ENCODE measurements at regions of chr22 and their contacts with region 1.

Region 1: GRCh38 chr22:17077255-17077654 is 7.5 kb upstream of the IL17RA start:
- DNase-seq: no peak
- ATAC-seq: no peak
- H3K4me3 ChIP-seq: no peak overlapping the region
- H3K27ac ChIP-seq: no peak overlapping the region
- H3K4me1 ChIP-seq: peaks cover 0 to 23% (median 0%) of the 10 kb centered on the region in 12 donors
- H3K27me3 ChIP-seq: no peaks in the 10 kb centered on the region
- CTCF ChIP-seq: no peak
- POLR2A ChIP-seq: no peak

Region 2: DNA sequence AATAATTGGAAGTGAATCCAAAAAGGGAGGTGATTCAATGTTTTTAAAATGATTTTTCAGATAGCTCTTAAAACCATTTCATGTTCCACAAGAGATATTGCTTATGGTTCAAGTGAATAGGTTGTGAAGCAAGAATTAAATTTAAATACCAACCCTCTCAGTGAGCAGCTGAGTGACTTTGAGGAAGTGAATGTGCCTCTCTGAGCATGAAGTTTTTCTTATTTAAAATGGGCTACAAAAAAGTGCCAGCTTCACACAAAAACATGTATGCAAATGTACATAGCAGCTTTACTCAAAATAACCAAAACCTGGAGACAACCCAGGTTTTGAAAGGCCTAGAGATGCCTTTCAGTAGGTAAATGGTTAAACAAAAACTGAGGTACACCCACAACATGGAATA is 33.7 kb before region 1 on chr22:
- intact Hi-C with region 1: no loop called
- DNase-seq: no peak
- ATAC-seq: no peak
- H3K4me3 ChIP-seq: no peak overlapping the region
- H3K27ac ChIP-seq: no peak overlapping the region
- H3K4me1 ChIP-seq: no peaks in the 10 kb centered on the region
- H3K27me3 ChIP-seq: peaks cover 0 to 4% (median 0%) of the 10 kb centered on the region in 9 donors
- CTCF ChIP-seq: no peak
- POLR2A ChIP-seq: no peak

Region 3: GRCh38 chr22:17121227-17122195 is 44.3 kb after region 1 on chr22 and contains the start of gene TMEM121B:
- intact Hi-C with region 1: loop called in 1 of 10 experiments (anchors 2 kb)
- DNase-seq: peak; percentile 83 to 91 (median 89)
- ATAC-seq: peak; percentile 47 to 88 (median 84)
- H3K4me3 ChIP-seq: peak within 1 kb of the TSS; percentile 55 to 79 (median 65)
- H3K27ac ChIP-seq: peak within 1 kb of the TSS; percentile 46 to 87 (median 64)
- H3K4me1 ChIP-seq: peaks cover 0 to 48% (median 19%) of the 10 kb centered on the region in 12 donors
- H3K27me3 ChIP-seq: peaks cover 0 to 13% (median 0%) of the 10 kb centered on the region in 9 donors
- CTCF ChIP-seq: no peak
- POLR2A ChIP-seq: no peak
- total RNA-seq, gene TMEM121B: 1.1 to 3.3 (median 1.8) TPM

Region 4: DNA sequence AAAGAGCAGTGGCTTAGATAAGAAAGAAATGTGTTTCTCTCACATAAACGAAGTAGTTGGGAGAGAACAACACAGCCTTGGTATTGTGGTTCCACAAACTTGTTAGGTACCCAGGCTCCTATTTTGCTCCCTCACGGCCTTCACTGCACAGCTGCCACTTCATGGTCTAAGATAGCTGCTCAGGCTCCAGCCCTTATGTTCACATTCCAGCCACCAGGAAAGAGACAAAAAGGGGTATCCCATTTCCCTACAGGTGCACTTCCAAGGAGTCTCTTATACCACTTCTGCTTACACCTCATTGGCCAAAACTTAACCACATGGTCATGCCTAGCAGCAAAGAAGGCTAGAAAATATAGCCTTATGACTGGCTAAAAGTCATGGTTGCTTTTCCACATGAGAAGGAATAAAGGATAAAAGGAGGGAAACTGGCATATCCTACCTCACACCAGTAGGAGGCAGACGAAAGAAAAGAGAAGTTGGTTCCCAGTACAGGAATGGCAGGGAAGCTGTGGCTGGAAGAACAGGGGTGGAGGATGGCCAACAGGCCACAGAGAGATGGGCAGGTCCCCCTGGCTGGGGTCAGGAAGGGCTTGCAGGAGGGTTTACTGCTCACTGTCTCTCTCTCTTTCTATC is 87.3 kb after region 1 on chr22:
- intact Hi-C with region 1: loop called in 1 of 10 experiments (anchors 5 kb)
- DNase-seq: no peak
- ATAC-seq: no peak
- H3K4me3 ChIP-seq: no peak overlapping the region
- H3K27ac ChIP-seq: no peak overlapping the region
- H3K4me1 ChIP-seq: peaks cover 0 to 23% (median 7%) of the 10 kb centered on the region in 12 donors
- H3K27me3 ChIP-seq: no peaks in the 10 kb centered on the region
- CTCF ChIP-seq: peak in 1 of 12 donors; percentile 12
- POLR2A ChIP-seq: no peak

Region 5: DNA sequence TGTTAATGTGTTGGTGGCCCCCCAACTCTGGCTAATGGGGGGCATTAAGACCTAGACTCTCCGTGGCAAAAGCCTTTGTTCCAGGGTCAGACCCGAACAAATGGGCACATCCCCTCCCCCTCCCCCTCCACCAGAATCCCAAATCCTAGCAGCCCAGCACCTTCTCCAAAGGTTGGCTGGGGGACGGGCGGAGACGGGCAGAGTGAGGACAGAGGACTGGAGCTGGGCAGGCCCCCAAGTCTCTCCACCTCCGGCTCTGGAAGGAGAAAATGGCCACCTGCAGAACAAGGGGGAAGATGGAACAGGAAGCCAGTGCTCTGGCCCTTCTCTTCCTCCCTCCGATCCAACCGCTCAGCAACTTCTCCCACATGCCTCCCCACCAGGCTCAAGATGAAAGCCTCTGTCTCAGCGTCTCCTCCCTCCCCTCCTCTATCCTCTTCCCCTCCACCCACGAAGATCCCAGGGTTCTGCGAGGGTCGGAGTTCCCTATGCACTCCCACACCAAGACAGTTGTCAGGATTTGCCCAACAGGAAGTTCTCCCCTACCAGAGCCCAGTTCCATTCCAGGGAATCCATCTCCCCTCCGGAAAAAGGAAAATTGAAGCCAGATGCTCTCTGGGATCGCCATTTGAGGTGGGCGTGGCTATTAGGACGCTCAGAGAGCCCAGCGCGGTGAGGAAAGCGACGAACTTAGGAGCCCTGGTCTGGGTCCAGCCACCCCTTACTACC is 121.9 kb after region 1 on chr22:
- intact Hi-C with region 1: loop called in 2 of 10 experiments (anchors 5 to 10 kb)
- DNase-seq: peak in 4 of 5 donors; percentile 50 to 69 (median 66)
- ATAC-seq: peak; percentile 43 to 82 (median 76)
- H3K4me3 ChIP-seq: peak overlapping the region; percentile 1 to 62 (median 53)
- H3K27ac ChIP-seq: peak overlapping the region; percentile 66 to 92 (median 87)
- H3K4me1 ChIP-seq: peaks cover 0 to 21% (median 7%) of the 10 kb centered on the region in 12 donors
- H3K27me3 ChIP-seq: no peaks in the 10 kb centered on the region
- CTCF ChIP-seq: no peak
- POLR2A ChIP-seq: no peak

Region 6: GRCh38 chr22:17492247-17492646 is 415.0 kb after region 1 on chr22:
- intact Hi-C with region 1: loop called in 1 of 10 experiments (anchors 5 kb)
- DNase-seq: peak in 2 of 5 donors; percentile 39 to 54
- ATAC-seq: peak; percentile 80 to 85 (median 81)
- H3K4me3 ChIP-seq: no peak overlapping the region
- H3K27ac ChIP-seq: peak overlapping the region in 8 of 12 donors; percentile 6 to 62 (median 25)
- H3K4me1 ChIP-seq: peaks cover 0 to 19% (median 8%) of the 10 kb centered on the region in 12 donors
- H3K27me3 ChIP-seq: no peaks in the 10 kb centered on the region
- CTCF ChIP-seq: no peak
- POLR2A ChIP-seq: no peak

Region 7: GRCh38 chr22:17501679-17502285 is 424.5 kb after region 1 on chr22:
- intact Hi-C with region 1: loop called (anchors 2 to 10 kb)
- DNase-seq: peak in 2 of 5 donors; percentile 19 to 26
- ATAC-seq: peak; percentile 76 to 88 (median 86)
- H3K4me3 ChIP-seq: no peak overlapping the region
- H3K27ac ChIP-seq: no peak overlapping the region
- H3K4me1 ChIP-seq: no peaks in the 10 kb centered on the region
- H3K27me3 ChIP-seq: no peaks in the 10 kb centered on the region
- CTCF ChIP-seq: peak; percentile 51 to 81 (median 69)
- POLR2A ChIP-seq: no peak

Region 8: DNA sequence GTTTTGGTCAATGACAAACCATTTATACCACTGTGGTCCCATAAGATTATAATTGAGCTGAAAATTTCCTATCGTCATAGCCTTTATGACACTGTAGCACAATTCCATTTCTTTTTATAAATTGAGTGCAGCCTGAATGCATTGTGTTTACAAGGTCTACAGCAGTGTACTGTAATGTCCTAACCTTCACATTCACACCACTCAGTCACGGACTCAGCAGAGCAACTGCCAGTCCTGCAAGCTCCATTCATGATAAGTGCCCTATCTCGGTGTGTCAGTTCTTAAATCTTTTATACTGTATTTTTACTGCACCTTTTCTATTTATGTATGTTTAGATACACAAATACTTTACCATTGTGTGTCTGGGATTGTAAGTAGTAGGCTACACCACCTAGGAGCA is 430.9 kb after region 1 on chr22:
- intact Hi-C with region 1: loop called in 8 of 10 experiments (anchors 5 to 10 kb)
- DNase-seq: no peak
- ATAC-seq: peak in 3 of 4 donors; percentile 46 to 73 (median 73)
- H3K4me3 ChIP-seq: no peak overlapping the region
- H3K27ac ChIP-seq: no peak overlapping the region
- H3K4me1 ChIP-seq: no peaks in the 10 kb centered on the region
- H3K27me3 ChIP-seq: no peaks in the 10 kb centered on the region
- CTCF ChIP-seq: no peak
- POLR2A ChIP-seq: no peak

Measured in heart left ventricle (tissue), 16 donors.